ENCODE measurements at regions of chr20 and their contacts with region 1.

Region 1: GRCh38 chr20:53915446-53916172 is 154.8 kb downstream of the BCAS1 start:
- DNase-seq: peak; percentile 89
- ATAC-seq: peak; percentile 84
- H3K4me3 ChIP-seq: peak overlapping the region; percentile 56
- H3K27ac ChIP-seq: peak overlapping the region; percentile 97
- H3K4me1 ChIP-seq: peaks cover 31% of the 10 kb centered on the region
- H3K27me3 ChIP-seq: no peaks in the 10 kb centered on the region
- CTCF ChIP-seq: peak; percentile 80 to 93 (median 90)
- EP300 ChIP-seq: no peak
- POLR2A ChIP-seq: peak; percentile 31; the same call in 1 of the 2 replicates
- RAD21 ChIP-seq: peak; percentile 94

Region 2: GRCh38 chr20:53413186-53413631 is 502.4 kb before region 1 on chr20:
- CTCF ChIA-PET with region 1: interaction called, 4 read pairs
- POLR2A ChIA-PET with region 1: no interaction called
- RAD21 ChIA-PET with region 1: interaction called, 3 read pairs
- SMC1A ChIA-PET with region 1: interaction called, 11 read pairs
- in situ Hi-C with region 1: no loop called
- intact Hi-C with region 1: loop called (anchors 1 kb)
- DNase-seq: peak; percentile 52
- ATAC-seq: peak; percentile 98
- H3K4me3 ChIP-seq: no peak overlapping the region
- H3K27ac ChIP-seq: no peak overlapping the region
- H3K4me1 ChIP-seq: peaks cover 2% of the 10 kb centered on the region; the same call in 1 of the 2 replicates
- H3K27me3 ChIP-seq: no peaks in the 10 kb centered on the region
- CTCF ChIP-seq: peak; percentile 87 to 96 (median 90)
- EP300 ChIP-seq: peak in 1 of 2 experiments; percentile 40; a peak in 1 of 4 replicates
- POLR2A ChIP-seq: no peak
- RAD21 ChIP-seq: peak; percentile 93

Region 3: GRCh38 chr20:53660078-53660909 is 255.3 kb before region 1 on chr20:
- CTCF ChIA-PET with region 1: interaction called, 3 read pairs
- POLR2A ChIA-PET with region 1: no interaction called
- RAD21 ChIA-PET with region 1: interaction called, 5 read pairs
- SMC1A ChIA-PET with region 1: interaction called, 9 read pairs
- in situ Hi-C with region 1: no loop called
- intact Hi-C with region 1: loop called (anchors 5 kb)
- DNase-seq: no peak
- ATAC-seq: peak; percentile 27
- H3K4me3 ChIP-seq: peak overlapping the region; percentile 63
- H3K27ac ChIP-seq: peak overlapping the region; percentile 84
- H3K4me1 ChIP-seq: peaks cover 61% of the 10 kb centered on the region
- H3K27me3 ChIP-seq: no peaks in the 10 kb centered on the region
- CTCF ChIP-seq: no peak
- EP300 ChIP-seq: no peak; a peak in 1 of 4 replicates
- POLR2A ChIP-seq: peak; percentile 41; the same call in 1 of the 2 replicates
- RAD21 ChIP-seq: 0 out of 2 replicates have a peak, but pooled peaks have one; percentile 4

Region 4: GRCh38 chr20:53757472-53757913 is 158.1 kb before region 1 on chr20:
- CTCF ChIA-PET with region 1: interaction called, 18 read pairs
- POLR2A ChIA-PET with region 1: interaction called, 5 read pairs
- RAD21 ChIA-PET with region 1: interaction called, 16 read pairs
- SMC1A ChIA-PET with region 1: interaction called, 91 read pairs
- in situ Hi-C with region 1: no loop called
- intact Hi-C with region 1: loop called (anchors 5 kb)
- DNase-seq: no peak
- ATAC-seq: no peak
- H3K4me3 ChIP-seq: no peak overlapping the region
- H3K27ac ChIP-seq: no peak overlapping the region
- H3K4me1 ChIP-seq: peaks cover 28% of the 10 kb centered on the region
- H3K27me3 ChIP-seq: no peaks in the 10 kb centered on the region
- CTCF ChIP-seq: no peak
- EP300 ChIP-seq: no peak
- POLR2A ChIP-seq: no peak
- RAD21 ChIP-seq: no peak

Region 5: DNA sequence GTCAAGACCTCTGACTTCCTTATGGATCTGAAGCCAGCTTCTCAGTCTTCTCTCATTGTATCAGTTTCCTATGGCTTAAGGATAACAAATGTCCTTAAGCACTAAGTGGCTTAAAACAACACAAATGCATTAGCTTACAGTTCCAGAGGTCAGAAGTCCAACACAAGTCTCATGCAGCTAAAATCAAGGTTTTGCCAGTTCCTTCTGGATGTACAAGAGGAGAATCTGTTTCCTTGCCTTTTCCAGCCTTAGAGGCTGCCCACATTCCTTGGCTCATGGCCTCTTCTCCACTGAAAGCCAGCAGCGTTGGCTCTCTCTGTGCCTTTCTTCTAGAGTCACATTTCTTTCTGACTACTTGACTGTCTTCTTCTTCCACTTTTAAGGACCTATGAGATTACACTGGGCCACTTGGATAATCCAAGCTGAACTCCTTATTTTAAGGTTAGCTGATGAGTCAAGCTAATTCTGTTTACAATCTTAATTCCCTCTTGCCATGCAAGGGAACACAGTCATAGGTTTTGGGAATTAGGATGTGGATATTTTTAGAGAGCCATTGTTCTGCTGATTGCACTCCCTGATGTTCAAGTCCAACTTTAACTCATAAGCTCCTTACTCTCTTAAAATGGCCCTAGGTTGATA is 24.2 kb before region 1 on chr20:
- CTCF ChIA-PET with region 1: interaction called, 11 read pairs
- POLR2A ChIA-PET with region 1: interaction called, 6 read pairs
- RAD21 ChIA-PET with region 1: interaction called, 31 read pairs
- SMC1A ChIA-PET with region 1: interaction called, 36 read pairs
- in situ Hi-C with region 1: no loop called
- intact Hi-C with region 1: loop called (anchors 1 kb)
- DNase-seq: no peak
- ATAC-seq: no peak
- H3K4me3 ChIP-seq: no peak overlapping the region
- H3K27ac ChIP-seq: no peak overlapping the region
- H3K4me1 ChIP-seq: peaks cover 25% of the 10 kb centered on the region
- H3K27me3 ChIP-seq: no peaks in the 10 kb centered on the region
- CTCF ChIP-seq: no peak
- EP300 ChIP-seq: no peak
- POLR2A ChIP-seq: no peak
- RAD21 ChIP-seq: no peak

Region 6: DNA sequence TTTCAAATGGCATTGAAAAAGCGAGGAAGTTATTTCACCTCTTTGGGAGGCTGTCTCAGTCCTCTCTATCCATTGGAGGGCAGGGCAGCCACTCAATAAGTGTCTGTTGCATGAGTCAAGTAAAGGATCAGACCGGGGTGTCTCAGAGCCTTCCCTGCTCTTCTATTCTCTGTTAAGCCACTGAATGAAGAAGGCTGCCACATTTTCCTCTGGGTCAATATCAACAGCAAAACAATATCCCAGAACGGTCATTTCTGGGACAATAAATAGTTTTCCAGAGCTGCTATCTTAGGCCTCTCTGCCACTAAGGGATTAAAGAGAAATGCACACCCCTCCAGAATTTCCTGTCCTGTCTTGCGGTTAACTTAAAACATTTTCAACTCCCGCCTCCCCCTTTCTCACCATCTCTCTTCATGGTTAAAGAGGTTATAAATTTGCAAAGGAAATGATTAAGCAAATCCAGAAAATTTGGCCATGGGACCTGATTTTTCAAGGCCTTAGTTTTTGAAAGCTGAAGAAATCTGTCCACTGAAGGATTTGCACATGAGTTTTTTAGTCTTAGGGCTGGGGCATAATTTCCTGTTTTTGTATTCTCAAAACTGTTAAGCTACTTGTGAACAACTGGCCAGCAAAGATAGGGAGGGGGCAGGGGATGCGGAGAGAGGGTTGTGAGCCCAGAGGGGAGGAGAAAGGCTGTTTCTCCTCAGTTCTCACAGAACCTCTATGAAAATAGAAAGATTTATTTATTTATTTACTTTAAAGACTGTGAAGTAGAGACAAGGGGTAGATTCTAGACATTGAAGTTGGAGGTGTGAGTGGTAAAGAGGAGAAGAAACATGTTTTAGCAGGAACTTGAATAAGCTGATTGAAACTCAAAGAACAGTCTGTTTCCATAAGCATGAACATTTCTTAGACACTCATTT is 19.1 kb after region 1 on chr20:
- CTCF ChIA-PET with region 1: interaction called, 258 read pairs
- POLR2A ChIA-PET with region 1: interaction called, 29 read pairs
- RAD21 ChIA-PET with region 1: interaction called, 394 read pairs
- SMC1A ChIA-PET with region 1: interaction called, 384 read pairs
- in situ Hi-C with region 1: no loop called
- intact Hi-C with region 1: loop called (anchors 1 kb)
- DNase-seq: no peak
- ATAC-seq: peak; percentile 77
- H3K4me3 ChIP-seq: peak overlapping the region; percentile 33; the same call in 1 of the 2 replicates
- H3K27ac ChIP-seq: peak overlapping the region; percentile 91
- H3K4me1 ChIP-seq: peaks cover 52% of the 10 kb centered on the region
- H3K27me3 ChIP-seq: no peaks in the 10 kb centered on the region
- CTCF ChIP-seq: 0 out of 6 replicates have a peak, but pooled peaks of 1 of the 3 experiments have one; percentile 4
- EP300 ChIP-seq: no peak
- POLR2A ChIP-seq: 0 out of 2 replicates have a peak, but pooled peaks have one; percentile 4
- RAD21 ChIP-seq: 0 out of 2 replicates have a peak, but pooled peaks have one; percentile 12

Region 7: GRCh38 chr20:54808078-54808856 is 892.7 kb after region 1 on chr20:
- CTCF ChIA-PET with region 1: no interaction called
- POLR2A ChIA-PET with region 1: no interaction called
- RAD21 ChIA-PET with region 1: no interaction called
- SMC1A ChIA-PET with region 1: no interaction called
- in situ Hi-C with region 1: no loop called
- intact Hi-C with region 1: no loop called
- DNase-seq: no peak
- ATAC-seq: no peak
- H3K4me3 ChIP-seq: no peak overlapping the region
- H3K27ac ChIP-seq: no peak overlapping the region
- H3K4me1 ChIP-seq: no peaks in the 10 kb centered on the region
- H3K27me3 ChIP-seq: no peaks in the 10 kb centered on the region
- CTCF ChIP-seq: no peak
- EP300 ChIP-seq: no peak
- POLR2A ChIP-seq: no peak
- RAD21 ChIP-seq: no peak